ENCODE measurements at regions of chr3 and their contacts with region 1.

Region 1: GRCh38 chr3:4656059-4656458 is 162.9 kb downstream of the ITPR1 start:
- DNase-seq: peak; percentile 44
- H3K4me3 ChIP-seq: no peak overlapping the region
- H3K27ac ChIP-seq: no peak overlapping the region
- H3K27me3 ChIP-seq: no peaks in the 10 kb centered on the region
- CTCF ChIP-seq: peak; percentile 98

Region 2: DNA sequence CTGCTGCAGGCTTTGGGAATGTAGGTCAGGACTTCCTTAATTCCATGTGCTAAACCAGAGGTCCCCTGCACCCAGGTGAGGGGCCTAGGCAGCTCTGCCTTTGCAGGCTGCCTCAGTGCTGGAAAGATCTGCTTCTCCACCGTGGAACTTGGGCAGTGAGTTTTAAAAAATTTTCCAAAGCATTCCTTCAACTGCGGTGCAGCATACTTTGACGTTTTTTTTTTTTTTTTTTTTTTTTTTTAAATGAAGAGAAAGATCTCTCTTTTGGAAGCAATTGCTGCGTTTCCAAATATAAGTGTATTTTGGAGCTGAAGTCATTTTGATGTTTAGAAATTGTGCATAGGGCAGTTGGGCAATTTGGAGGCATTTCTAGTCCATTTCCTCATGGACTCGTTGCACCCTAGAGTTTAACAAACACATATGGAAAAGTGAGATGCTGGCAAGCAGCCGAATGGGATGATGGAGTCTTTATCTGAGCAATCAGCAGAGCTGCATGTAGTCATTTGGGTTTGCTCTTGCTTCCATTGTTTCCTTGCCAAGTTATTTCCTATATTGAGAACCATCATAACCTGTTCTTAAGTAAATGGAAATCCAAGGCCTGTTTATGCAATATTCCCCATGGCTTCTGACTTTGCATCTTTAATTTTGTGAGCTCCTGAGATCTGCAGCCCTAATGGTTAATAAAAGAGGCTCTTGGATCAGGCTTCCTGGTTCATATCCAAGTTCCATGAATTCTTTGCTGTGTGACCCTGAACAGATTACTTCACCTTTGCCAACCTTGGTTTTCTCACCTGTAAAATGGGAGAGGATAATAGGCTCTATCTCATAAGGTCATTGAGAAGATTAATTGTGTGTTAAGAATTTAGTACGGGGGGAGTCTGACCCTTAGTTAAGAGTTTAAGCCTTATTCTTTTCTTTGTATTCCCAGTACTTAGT is 131.7 kb before region 1 on chr3:
- CTCF ChIA-PET with region 1: no interaction called
- POLR2A ChIA-PET with region 1: no interaction called
- DNase-seq: no peak
- H3K4me3 ChIP-seq: no peak overlapping the region
- H3K27ac ChIP-seq: no peak overlapping the region
- H3K27me3 ChIP-seq: no peaks in the 10 kb centered on the region
- CTCF ChIP-seq: no peak

Region 3: DNA sequence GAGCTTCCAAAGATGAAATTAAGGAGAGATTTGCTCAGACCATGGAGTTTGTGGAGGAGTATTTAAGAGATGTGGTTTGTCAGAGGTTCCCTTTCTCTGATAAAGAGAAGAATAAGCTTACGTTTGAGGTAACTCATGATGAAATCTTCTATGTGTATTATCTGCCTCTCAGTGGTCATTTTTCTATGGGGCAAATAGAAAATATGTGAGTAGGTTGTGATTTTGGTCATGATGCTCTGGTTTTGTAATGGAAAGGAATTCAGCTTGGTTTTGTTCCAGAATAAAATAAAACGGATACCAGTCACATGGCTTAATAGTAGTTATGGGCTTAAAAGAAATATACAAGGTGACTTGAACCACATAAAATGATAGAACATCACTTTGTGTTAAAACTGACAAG is 18.2 kb after region 1 on chr3:
- CTCF ChIA-PET with region 1: interaction called, 16 read pairs
- POLR2A ChIA-PET with region 1: no interaction called
- DNase-seq: peak; percentile 15
- H3K4me3 ChIP-seq: no peak overlapping the region
- H3K27ac ChIP-seq: no peak overlapping the region
- H3K27me3 ChIP-seq: no peaks in the 10 kb centered on the region
- CTCF ChIP-seq: no peak

Measured in AG04450 (cell line).